CD4-positive, alpha-beta memory T cell (primary cell): ENCODE measurements at regions of chr20 and their contacts with region 1.

Region 1: DNA sequence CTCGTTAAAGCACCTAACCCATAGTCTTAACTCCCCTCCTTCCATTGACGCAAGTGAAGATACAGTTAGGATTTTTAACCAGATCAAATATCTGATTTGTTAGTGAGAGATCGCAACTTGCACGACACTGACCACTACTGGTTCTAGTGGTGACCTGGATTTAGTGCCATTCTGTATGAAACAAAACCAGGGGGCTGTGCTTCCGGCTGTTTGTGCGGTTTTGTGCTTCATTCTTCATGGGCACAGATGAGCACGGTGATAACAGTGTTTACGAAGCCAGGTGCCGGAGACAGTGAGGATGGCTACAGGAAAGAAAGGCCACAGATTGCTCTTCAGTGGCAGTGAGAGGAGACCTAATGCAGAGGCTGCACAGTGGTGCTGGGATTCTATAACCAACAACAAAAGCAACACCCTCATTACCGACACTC is 75.5 kb downstream of the NOL4L start:
- DNase-seq: peak; percentile 76 to 89 (median 82)
- H3K4me3 ChIP-seq: peak overlapping the region in 1 of 2 donors; percentile 43
- H3K4me3 Mint-ChIP-seq: peak overlapping the region; percentile 77 to 86 (median 82)
- H3K27ac ChIP-seq: peak overlapping the region; percentile 60
- H3K27ac Mint-ChIP-seq: peak overlapping the region; percentile 92 to 97 (median 94)
- H3K4me1 ChIP-seq: peaks cover 71% of the 10 kb centered on the region
- H3K4me1 Mint-ChIP-seq: peaks cover 56 to 90% (median 68%) of the 10 kb centered on the region in 4 donors
- H3K27me3 ChIP-seq: no peaks in the 10 kb centered on the region
- H3K27me3 Mint-ChIP-seq: no peaks in the 10 kb centered on the region

Region 2: DNA sequence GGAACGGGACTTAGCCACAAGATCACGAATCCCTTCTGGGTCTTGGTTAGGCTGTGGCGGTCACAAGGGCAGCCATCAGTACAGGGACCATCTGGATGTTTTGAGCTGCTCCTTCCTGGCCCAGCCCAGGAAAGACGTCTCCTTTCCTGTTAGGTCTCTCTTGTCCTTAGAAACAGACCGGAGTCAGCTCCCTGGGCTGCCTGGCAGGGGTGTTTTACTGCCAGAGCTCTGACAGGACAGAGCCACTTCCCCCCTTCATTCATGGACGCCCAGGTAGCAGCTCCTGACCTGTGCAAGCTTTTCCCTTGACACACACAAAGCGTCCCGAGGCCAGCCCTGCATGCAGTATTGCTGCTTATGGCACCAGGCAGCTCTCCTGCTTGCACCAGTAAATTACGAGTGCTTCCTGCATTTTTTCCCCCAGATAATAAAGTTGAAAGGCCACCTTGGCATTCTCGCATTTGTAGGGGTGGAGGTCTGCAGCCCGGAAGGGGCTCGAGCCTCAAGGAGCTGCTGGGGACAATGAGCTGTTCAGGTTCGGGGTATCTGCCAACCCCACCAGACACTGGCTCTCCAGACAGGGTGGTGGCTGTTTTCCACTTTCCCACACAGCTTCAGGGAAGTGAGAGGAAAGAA is 11.9 kb before region 1 on chr20:
- CTCF ChIA-PET with region 1: interaction called, 15 read pairs
- POLR2A ChIA-PET with region 1: interaction called, 13 read pairs
- intact Hi-C with region 1: no loop called
- DNase-seq: no peak
- H3K4me3 ChIP-seq: no peak overlapping the region
- H3K4me3 Mint-ChIP-seq: no peak overlapping the region
- H3K27ac ChIP-seq: peak overlapping the region; percentile 0
- H3K27ac Mint-ChIP-seq: peak overlapping the region in 4 of 7 donors; percentile 12 to 81 (median 42)
- H3K4me1 ChIP-seq: peaks cover 6% of the 10 kb centered on the region
- H3K4me1 Mint-ChIP-seq: peaks cover 21 to 47% (median 30%) of the 10 kb centered on the region in 4 donors
- H3K27me3 ChIP-seq: no peaks in the 10 kb centered on the region
- H3K27me3 Mint-ChIP-seq: no peaks in the 10 kb centered on the region

Region 3: DNA sequence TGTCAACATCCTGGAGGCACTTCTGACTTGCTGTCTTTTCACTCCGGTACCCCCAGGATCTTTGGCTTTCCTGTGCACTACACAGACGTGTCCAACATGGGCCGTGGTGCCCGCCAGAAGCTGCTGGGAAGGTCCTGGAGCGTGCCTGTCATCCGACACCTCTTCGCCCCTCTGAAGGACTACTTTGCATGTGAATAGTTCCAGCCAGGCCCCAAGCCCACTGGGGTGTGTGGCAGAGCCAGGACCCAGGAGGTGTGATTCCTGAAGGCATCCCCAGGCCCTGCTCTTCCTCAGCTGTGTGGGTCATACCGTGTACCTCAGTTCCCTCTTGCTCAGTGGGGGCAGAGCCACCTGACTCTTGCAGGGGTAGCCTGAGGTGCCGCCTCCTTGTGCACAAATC is 298.1 kb after region 1 on chr20:
- CTCF ChIA-PET with region 1: no interaction called
- POLR2A ChIA-PET with region 1: no interaction called
- intact Hi-C with region 1: no loop called
- DNase-seq: no peak
- H3K4me3 ChIP-seq: no peak overlapping the region
- H3K4me3 Mint-ChIP-seq: no peak overlapping the region
- H3K27ac ChIP-seq: no peak overlapping the region
- H3K27ac Mint-ChIP-seq: no peak overlapping the region
- H3K4me1 ChIP-seq: no peaks in the 10 kb centered on the region
- H3K4me1 Mint-ChIP-seq: peaks cover 0 to 3% (median 0%) of the 10 kb centered on the region in 4 donors
- H3K27me3 ChIP-seq: no peaks in the 10 kb centered on the region
- H3K27me3 Mint-ChIP-seq: no peaks in the 10 kb centered on the region